CD4-positive, alpha-beta memory T cell (primary cell): ENCODE measurements at regions of chr6 and their contacts with region 1.

Region 1: GRCh38 chr6:137313928-137314855 is 95.0 kb upstream of the IFNGR1 start:
- DNase-seq: peak; percentile 47 to 66 (median 52)
- H3K4me3 ChIP-seq: no peak overlapping the region
- H3K4me3 Mint-ChIP-seq: no peak overlapping the region
- H3K27ac ChIP-seq: no peak overlapping the region
- H3K27ac Mint-ChIP-seq: peak overlapping the region in 1 of 7 donors; percentile 3
- H3K4me1 ChIP-seq: peaks cover 10% of the 10 kb centered on the region
- H3K4me1 Mint-ChIP-seq: peaks cover 2 to 12% (median 9%) of the 10 kb centered on the region in 4 donors
- H3K27me3 ChIP-seq: no peaks in the 10 kb centered on the region
- H3K27me3 Mint-ChIP-seq: no peaks in the 10 kb centered on the region

Region 2: GRCh38 chr6:136628996-136629395 is 685.2 kb before region 1 on chr6:
- CTCF ChIA-PET with region 1: no interaction called
- POLR2A ChIA-PET with region 1: no interaction called
- intact Hi-C with region 1: no loop called
- DNase-seq: no peak
- H3K4me3 ChIP-seq: no peak overlapping the region
- H3K4me3 Mint-ChIP-seq: no peak overlapping the region
- H3K27ac ChIP-seq: no peak overlapping the region
- H3K27ac Mint-ChIP-seq: no peak overlapping the region
- H3K4me1 ChIP-seq: no peaks in the 10 kb centered on the region
- H3K4me1 Mint-ChIP-seq: peaks cover 0 to 8% (median 1%) of the 10 kb centered on the region in 4 donors
- H3K27me3 ChIP-seq: no peaks in the 10 kb centered on the region
- H3K27me3 Mint-ChIP-seq: no peaks in the 10 kb centered on the region

Region 3: GRCh38 chr6:137076277-137077068 is 237.7 kb before region 1 on chr6:
- CTCF ChIA-PET with region 1: interaction called, 21 read pairs
- POLR2A ChIA-PET with region 1: no interaction called
- intact Hi-C with region 1: loop called (anchors 1 kb)
- DNase-seq: peak; percentile 38 to 53 (median 47)
- H3K4me3 ChIP-seq: no peak overlapping the region
- H3K4me3 Mint-ChIP-seq: no peak overlapping the region
- H3K27ac ChIP-seq: no peak overlapping the region
- H3K27ac Mint-ChIP-seq: no peak overlapping the region
- H3K4me1 ChIP-seq: no peaks in the 10 kb centered on the region
- H3K4me1 Mint-ChIP-seq: no peaks in the 10 kb centered on the region
- H3K27me3 ChIP-seq: no peaks in the 10 kb centered on the region
- H3K27me3 Mint-ChIP-seq: peaks cover 10 to 18% of the 10 kb centered on the region in 2 donors

Region 4: DNA sequence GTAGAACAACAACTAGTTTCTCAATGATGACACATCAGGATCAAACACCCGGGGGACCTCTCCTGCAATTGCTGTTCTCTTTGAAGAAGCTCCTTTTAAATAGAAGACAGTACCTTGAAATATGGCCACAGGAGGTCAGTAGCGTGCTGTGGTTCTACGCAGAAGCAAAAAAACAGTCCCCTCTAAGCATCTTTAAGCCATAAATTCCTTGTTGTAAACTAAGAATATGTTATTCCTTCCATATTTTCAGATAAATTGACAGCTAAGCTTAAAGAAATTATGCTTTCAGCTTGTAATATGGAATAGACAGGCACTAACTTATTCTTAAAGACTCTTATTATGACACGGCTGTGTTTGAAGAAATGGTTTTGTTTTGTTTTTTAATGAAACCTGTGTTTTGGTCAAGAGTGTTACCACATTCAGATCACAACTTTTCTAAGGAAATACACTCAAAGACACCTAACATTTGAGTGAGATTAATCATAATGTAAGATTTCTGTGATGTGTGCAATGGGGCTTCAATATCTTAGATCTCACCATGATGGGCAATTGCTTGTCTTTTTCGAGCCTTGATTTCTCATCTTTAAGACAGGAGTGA is 219.7 kb before region 1 on chr6:
- CTCF ChIA-PET with region 1: interaction called, 62 read pairs
- POLR2A ChIA-PET with region 1: interaction called, 7 read pairs
- intact Hi-C with region 1: loop called (anchors 1 kb)
- DNase-seq: peak; percentile 55 to 59 (median 57)
- H3K4me3 ChIP-seq: no peak overlapping the region
- H3K4me3 Mint-ChIP-seq: peak overlapping the region in 3 of 8 donors; percentile 13 to 42 (median 27)
- H3K27ac ChIP-seq: no peak overlapping the region
- H3K27ac Mint-ChIP-seq: peak overlapping the region in 3 of 7 donors; percentile 42 to 67 (median 61)
- H3K4me1 ChIP-seq: peaks cover 19% of the 10 kb centered on the region
- H3K4me1 Mint-ChIP-seq: peaks cover 12 to 26% (median 15%) of the 10 kb centered on the region in 4 donors
- H3K27me3 ChIP-seq: no peaks in the 10 kb centered on the region
- H3K27me3 Mint-ChIP-seq: peaks cover 3 to 4% of the 10 kb centered on the region in 2 donors

Region 5: GRCh38 chr6:137165375-137166246 is 148.6 kb before region 1 on chr6:
- CTCF ChIA-PET with region 1: interaction called, 9 read pairs
- POLR2A ChIA-PET with region 1: interaction called, 3 read pairs
- intact Hi-C with region 1: loop called (anchors 5 kb)
- DNase-seq: peak; percentile 36 to 73 (median 43)
- H3K4me3 ChIP-seq: no peak overlapping the region
- H3K4me3 Mint-ChIP-seq: peak overlapping the region in 7 of 8 donors; percentile 31 to 78 (median 60)
- H3K27ac ChIP-seq: no peak overlapping the region
- H3K27ac Mint-ChIP-seq: peak overlapping the region; percentile 11 to 88 (median 68)
- H3K4me1 ChIP-seq: peaks cover 16% of the 10 kb centered on the region
- H3K4me1 Mint-ChIP-seq: peaks cover 14 to 43% (median 27%) of the 10 kb centered on the region in 4 donors
- H3K27me3 ChIP-seq: no peaks in the 10 kb centered on the region
- H3K27me3 Mint-ChIP-seq: peaks cover 2 to 4% of the 10 kb centered on the region in 2 donors

Region 6: DNA sequence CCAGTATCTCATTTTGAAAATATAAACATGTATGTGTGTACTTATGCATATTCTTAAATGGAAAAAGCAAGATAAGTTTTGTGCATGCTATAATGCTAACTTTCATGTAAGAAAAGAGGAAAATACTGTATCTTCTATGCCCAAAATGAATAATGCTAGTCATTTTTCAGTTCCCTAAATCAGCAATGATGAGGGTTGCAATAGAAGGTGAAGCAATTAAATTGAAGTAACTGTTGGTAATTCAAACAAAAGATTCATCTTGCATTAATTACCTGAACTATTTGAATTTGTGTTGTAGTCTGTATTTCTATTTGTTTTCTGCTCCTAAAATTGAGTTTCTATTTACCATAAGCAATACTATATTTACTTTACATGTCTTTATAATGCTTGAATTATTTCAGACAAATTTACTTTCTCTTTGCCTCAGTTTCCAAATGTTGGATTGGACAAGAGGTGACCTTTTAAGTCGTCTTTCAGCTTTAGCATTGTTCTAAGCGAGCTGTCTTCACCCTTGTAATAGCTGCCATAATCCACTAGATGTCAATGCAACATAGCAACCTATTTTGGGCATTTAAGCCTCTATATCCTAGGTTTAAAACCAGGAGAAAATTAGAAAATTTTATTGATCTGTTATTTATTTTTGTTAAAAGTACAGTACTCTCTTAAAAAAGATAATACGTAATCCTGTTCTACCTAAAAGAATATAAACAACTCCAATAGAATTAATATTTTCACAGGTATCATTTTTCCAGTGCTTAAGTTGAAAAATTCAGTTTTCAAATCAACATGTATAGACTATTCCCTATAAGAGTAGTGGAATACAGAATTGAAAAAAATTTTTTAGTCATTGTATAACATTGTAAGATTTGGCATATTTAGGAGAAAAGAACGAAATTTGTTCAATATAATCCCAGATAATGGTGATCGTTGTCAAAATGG is 42.7 kb before region 1 on chr6:
- CTCF ChIA-PET with region 1: interaction called, 10 read pairs
- POLR2A ChIA-PET with region 1: interaction called, 4 read pairs
- intact Hi-C with region 1: loop called (anchors 1 kb)
- DNase-seq: peak in 4 of 5 donors; percentile 26 to 36 (median 33)
- H3K4me3 ChIP-seq: no peak overlapping the region
- H3K4me3 Mint-ChIP-seq: no peak overlapping the region
- H3K27ac ChIP-seq: no peak overlapping the region
- H3K27ac Mint-ChIP-seq: no peak overlapping the region
- H3K4me1 ChIP-seq: peaks cover 6% of the 10 kb centered on the region
- H3K4me1 Mint-ChIP-seq: peaks cover 2 to 19% (median 12%) of the 10 kb centered on the region in 4 donors
- H3K27me3 ChIP-seq: no peaks in the 10 kb centered on the region
- H3K27me3 Mint-ChIP-seq: no peaks in the 10 kb centered on the region

Region 7: GRCh38 chr6:137415127-137415833 is 101.1 kb after region 1 on chr6:
- CTCF ChIA-PET with region 1: interaction called, 23 read pairs
- POLR2A ChIA-PET with region 1: interaction called, 3 read pairs
- intact Hi-C with region 1: loop called (anchors 1 kb)
- DNase-seq: peak; percentile 62 to 76 (median 73)
- H3K4me3 ChIP-seq: peak overlapping the region; percentile 48 to 53
- H3K4me3 Mint-ChIP-seq: peak overlapping the region; percentile 83 to 93 (median 88)
- H3K27ac ChIP-seq: peak overlapping the region; percentile 60
- H3K27ac Mint-ChIP-seq: peak overlapping the region; percentile 79 to 97 (median 92)
- H3K4me1 ChIP-seq: peaks cover 10% of the 10 kb centered on the region
- H3K4me1 Mint-ChIP-seq: peaks cover 6 to 20% (median 14%) of the 10 kb centered on the region in 4 donors
- H3K27me3 ChIP-seq: no peaks in the 10 kb centered on the region
- H3K27me3 Mint-ChIP-seq: no peaks in the 10 kb centered on the region